CD8-positive, alpha-beta T cell (primary cell): ENCODE measurements at regions of chr15 and their contacts with region 1.

Region 1: GRCh38 chr15:66700802-66701421 is 1.1 kb upstream of the SMAD6 start:
- DNase-seq: peak; percentile 62 to 87 (median 81)
- ATAC-seq: peak; percentile 81
- H3K4me3 ChIP-seq: peak overlapping the region; percentile 70 to 77
- H3K4me3 Mint-ChIP-seq: peak overlapping the region; percentile 94
- H3K27ac ChIP-seq: no peak overlapping the region
- H3K27ac Mint-ChIP-seq: peak overlapping the region; percentile 73
- H3K4me1 ChIP-seq: peaks cover 20% of the 10 kb centered on the region
- H3K4me1 Mint-ChIP-seq: peaks cover 21% of the 10 kb centered on the region
- H3K27me3 ChIP-seq: peaks cover 8 to 14% of the 10 kb centered on the region in 2 experiments
- H3K27me3 Mint-ChIP-seq: peaks cover 12% of the 10 kb centered on the region
- CTCF ChIP-seq: no peak

Region 2: GRCh38 chr15:64809649-64810496 is 1891.0 kb before region 1 on chr15:
- CTCF ChIA-PET with region 1: no interaction called
- POLR2A ChIA-PET with region 1: no interaction called
- intact Hi-C with region 1: no loop called
- DNase-seq: peak; percentile 27 to 78 (median 67)
- ATAC-seq: peak; percentile 71
- H3K4me3 ChIP-seq: no peak overlapping the region
- H3K4me3 Mint-ChIP-seq: no peak overlapping the region
- H3K27ac ChIP-seq: no peak overlapping the region
- H3K27ac Mint-ChIP-seq: no peak overlapping the region
- H3K4me1 ChIP-seq: no peaks in the 10 kb centered on the region
- H3K4me1 Mint-ChIP-seq: peaks cover 2% of the 10 kb centered on the region
- H3K27me3 ChIP-seq: no peaks in the 10 kb centered on the region
- H3K27me3 Mint-ChIP-seq: peaks cover 2% of the 10 kb centered on the region
- CTCF ChIP-seq: peak; percentile 88

Region 3: DNA sequence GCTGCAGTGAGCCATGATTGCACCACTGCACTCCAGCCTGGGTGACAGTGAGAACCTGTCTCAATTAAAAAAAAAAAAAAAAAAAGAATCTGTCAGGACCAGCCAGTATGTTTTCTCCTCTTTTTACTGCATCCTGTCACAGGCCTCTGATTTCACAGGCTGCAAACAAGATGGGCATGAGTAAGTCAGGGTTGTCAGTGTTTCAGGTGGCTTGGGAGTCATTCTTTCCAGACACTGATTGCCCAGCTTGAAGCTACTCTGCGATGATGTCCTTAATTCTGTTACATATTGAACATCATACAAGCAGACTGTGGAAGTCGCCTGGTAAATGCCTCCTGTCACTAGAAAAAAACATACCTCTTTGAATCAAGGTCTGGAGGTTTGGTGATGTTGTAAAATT is 388.8 kb before region 1 on chr15:
- CTCF ChIA-PET with region 1: no interaction called
- POLR2A ChIA-PET with region 1: no interaction called
- intact Hi-C with region 1: no loop called
- DNase-seq: no peak
- ATAC-seq: no peak
- H3K4me3 ChIP-seq: no peak overlapping the region
- H3K4me3 Mint-ChIP-seq: no peak overlapping the region
- H3K27ac ChIP-seq: no peak overlapping the region
- H3K27ac Mint-ChIP-seq: no peak overlapping the region
- H3K4me1 ChIP-seq: no peaks in the 10 kb centered on the region
- H3K4me1 Mint-ChIP-seq: no peaks in the 10 kb centered on the region
- H3K27me3 ChIP-seq: no peaks in the 10 kb centered on the region
- H3K27me3 Mint-ChIP-seq: no peaks in the 10 kb centered on the region
- CTCF ChIP-seq: no peak

Region 4: GRCh38 chr15:67254238-67255175 is 553.6 kb after region 1 on chr15 and contains the starts of genes AAGAB and IQCH:
- CTCF ChIA-PET with region 1: no interaction called
- POLR2A ChIA-PET with region 1: no interaction called
- intact Hi-C with region 1: loop called (anchors 10 kb)
- DNase-seq: peak; percentile 93 to 99 (median 97)
- ATAC-seq: peak; percentile 93
- H3K4me3 ChIP-seq: peak within 1 kb of the TSS; percentile 78 to 92
- H3K4me3 Mint-ChIP-seq: peak within 1 kb of the TSS; percentile 98
- H3K27ac ChIP-seq: peak within 1 kb of the TSS; percentile 79 to 86
- H3K27ac Mint-ChIP-seq: peak within 1 kb of the TSS; percentile 98
- H3K4me1 ChIP-seq: peaks cover 13% of the 10 kb centered on the region
- H3K4me1 Mint-ChIP-seq: peaks cover 44% of the 10 kb centered on the region
- H3K27me3 ChIP-seq: peaks cover 0 to 3% of the 10 kb centered on the region in 2 experiments
- H3K27me3 Mint-ChIP-seq: no peaks in the 10 kb centered on the region
- CTCF ChIP-seq: no peak
- total RNA-seq, gene AAGAB: 17.0 to 18.0 TPM
- total RNA-seq, gene IQCH: 0.39 to 0.60 TPM

Region 5: GRCh38 chr15:68229386-68230156 is 1528.7 kb after region 1 on chr15 and contains the start of gene CLN6:
- CTCF ChIA-PET with region 1: no interaction called
- POLR2A ChIA-PET with region 1: no interaction called
- intact Hi-C with region 1: loop called in 1 of 2 experiments (anchors 5 kb)
- DNase-seq: peak; percentile 55 to 91 (median 80)
- ATAC-seq: peak; percentile 87
- H3K4me3 ChIP-seq: peak within 1 kb of the TSS; percentile 86 to 90
- H3K4me3 Mint-ChIP-seq: peak within 1 kb of the TSS; percentile 93
- H3K27ac ChIP-seq: peak within 1 kb of the TSS; percentile 60 to 62
- H3K27ac Mint-ChIP-seq: peak within 1 kb of the TSS; percentile 88
- H3K4me1 ChIP-seq: peaks cover 23% of the 10 kb centered on the region
- H3K4me1 Mint-ChIP-seq: peaks cover 36% of the 10 kb centered on the region
- H3K27me3 ChIP-seq: no peaks in the 10 kb centered on the region
- H3K27me3 Mint-ChIP-seq: peaks cover 5% of the 10 kb centered on the region
- CTCF ChIP-seq: peak; percentile 27
- total RNA-seq, gene CLN6: 7.6 to 7.9 TPM